ENCODE measurements at regions of chr7 and their contacts with region 1.

Region 1: DNA sequence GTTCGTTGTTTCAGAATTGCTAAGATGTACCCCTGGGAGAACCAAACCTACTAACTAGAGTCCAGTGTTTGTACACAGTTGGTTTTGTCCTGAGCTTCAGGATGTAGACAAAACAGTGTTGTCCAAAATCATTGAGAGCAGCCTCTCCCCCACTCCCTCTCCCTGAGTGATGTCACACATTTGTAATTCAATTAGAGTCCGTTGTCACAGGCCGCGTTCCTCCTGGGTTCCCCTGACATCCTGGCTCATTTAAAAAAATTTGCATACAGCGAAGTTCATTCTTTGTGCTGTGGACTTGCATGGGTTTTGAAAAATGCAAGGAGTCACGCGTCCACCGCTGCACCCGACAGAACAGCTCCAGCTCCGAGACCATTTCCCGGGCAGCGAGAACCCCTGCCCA is 10.3 kb downstream of the GRIFIN start:
- DNase-seq: peak in 1 of 2 donors; percentile 4
- H3K4me3 ChIP-seq: no peak overlapping the region
- H3K27ac ChIP-seq: no peak overlapping the region
- H3K4me1 ChIP-seq: peaks cover 4 to 9% (median 7%) of the 10 kb centered on the region in 4 donors
- H3K27me3 ChIP-seq: peaks cover 0 to 17% (median 0%) of the 10 kb centered on the region in 3 donors
- CTCF ChIP-seq: no peak
- EP300 ChIP-seq: no peak
- POLR2A ChIP-seq: no peak

Region 2: GRCh38 chr7:2299131-2299829 is 166.6 kb before region 1 on chr7:
- intact Hi-C with region 1: no loop called
- DNase-seq: peak in 1 of 2 donors; percentile 60
- H3K4me3 ChIP-seq: no peak overlapping the region
- H3K27ac ChIP-seq: peak overlapping the region; percentile 30 to 67 (median 54)
- H3K4me1 ChIP-seq: peaks cover 0 to 6% (median 3%) of the 10 kb centered on the region in 4 donors
- H3K27me3 ChIP-seq: no peaks in the 10 kb centered on the region
- CTCF ChIP-seq: no peak
- EP300 ChIP-seq: no peak
- POLR2A ChIP-seq: no peak

Region 3: GRCh38 chr7:2567679-2568278 is 101.9 kb after region 1 on chr7:
- intact Hi-C with region 1: loop called (anchors 10 kb)
- DNase-seq: peak in 1 of 2 donors; percentile 73
- H3K4me3 ChIP-seq: no peak overlapping the region
- H3K27ac ChIP-seq: no peak overlapping the region
- H3K4me1 ChIP-seq: peaks cover 0 to 37% (median 8%) of the 10 kb centered on the region in 4 donors
- H3K27me3 ChIP-seq: no peaks in the 10 kb centered on the region
- CTCF ChIP-seq: peak in 2 of 7 experiments; percentile 7 to 14
- EP300 ChIP-seq: no peak
- POLR2A ChIP-seq: no peak